ENCODE measurements at regions of chr13 and their contacts with region 1.

Region 1: DNA sequence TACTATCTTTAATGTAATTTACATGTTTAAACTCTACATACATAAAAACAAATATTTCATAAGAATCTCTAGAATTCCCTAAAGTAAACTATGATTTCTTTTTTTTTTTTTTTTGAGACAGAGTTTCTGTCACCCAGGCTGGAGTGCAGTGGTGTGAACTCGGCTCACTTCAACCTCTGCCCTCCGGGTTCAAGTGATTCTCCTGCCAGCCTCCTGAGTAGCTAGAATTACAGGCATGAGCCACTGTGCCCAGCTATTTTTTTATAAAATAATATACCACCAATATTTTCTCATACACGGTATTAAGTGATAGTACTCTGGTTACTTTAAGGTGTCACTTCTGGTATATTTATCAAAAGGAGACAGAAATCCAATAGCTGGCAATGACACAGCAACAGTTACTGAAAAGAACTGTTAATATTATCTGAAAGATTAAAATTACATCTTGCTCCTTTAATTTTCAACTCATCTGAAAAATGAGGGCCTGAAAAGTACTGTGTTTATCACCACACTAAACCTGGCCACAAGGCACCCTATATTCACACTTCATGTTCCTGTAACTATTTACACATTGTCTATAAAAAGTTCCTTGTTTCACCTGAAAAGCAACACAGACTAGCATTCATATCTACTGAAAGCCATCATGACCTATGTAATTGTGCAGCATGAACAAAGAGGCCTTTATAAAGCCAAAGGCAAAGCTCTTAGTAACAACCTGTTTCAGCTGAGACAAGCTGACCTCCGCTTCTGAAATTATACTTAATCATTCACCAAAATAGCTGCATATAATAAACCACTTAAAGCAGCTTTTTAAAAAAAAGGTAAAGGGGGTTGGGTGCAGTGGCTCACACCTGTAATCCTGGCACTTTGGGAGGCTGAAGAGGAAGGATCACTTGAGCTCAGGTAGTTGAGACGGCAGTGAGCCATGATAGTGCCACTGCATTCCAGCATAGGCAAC is 106.1 kb downstream of the SLC25A15 start:
- DNase-seq: peak; percentile 94
- ATAC-seq: peak; percentile 99
- H3K4me3 ChIP-seq: peak overlapping the region; percentile 27 to 42 (median 28); a peak in 3 of 6 replicates
- H3K27ac ChIP-seq: peak overlapping the region; percentile 84
- H3K4me1 ChIP-seq: peaks cover 33% of the 10 kb centered on the region
- H3K27me3 ChIP-seq: no peaks in the 10 kb centered on the region
- CTCF ChIP-seq: no peak
- EP300 ChIP-seq: peak in 1 of 2 experiments; percentile 59; a peak in 2 of 4 replicates
- POLR2A ChIP-seq: no peak; a peak in 1 of 4 replicates
- RAD21 ChIP-seq: no peak

Region 2: GRCh38 chr13:40377783-40378182 is 517.7 kb before region 1 on chr13:
- CTCF ChIA-PET with region 1: no interaction called
- POLR2A ChIA-PET with region 1: no interaction called
- in situ Hi-C with region 1: no loop called
- intact Hi-C with region 1: no loop called
- DNase-seq: no peak
- ATAC-seq: no peak
- H3K4me3 ChIP-seq: no peak overlapping the region
- H3K27ac ChIP-seq: no peak overlapping the region
- H3K4me1 ChIP-seq: peaks cover 27% of the 10 kb centered on the region
- H3K27me3 ChIP-seq: peaks cover 5 to 21% of the 10 kb centered on the region in 2 experiments; a peak in 2 of 5 replicates
- CTCF ChIP-seq: no peak
- EP300 ChIP-seq: no peak
- POLR2A ChIP-seq: no peak
- RAD21 ChIP-seq: no peak

Region 3: GRCh38 chr13:41004875-41005693 is 109.6 kb after region 1 on chr13:
- CTCF ChIA-PET with region 1: no interaction called
- POLR2A ChIA-PET with region 1: no interaction called
- in situ Hi-C with region 1: no loop called
- intact Hi-C with region 1: loop called (anchors 10 kb)
- DNase-seq: no peak
- ATAC-seq: no peak
- H3K4me3 ChIP-seq: no peak overlapping the region; a peak in 1 of 6 replicates
- H3K27ac ChIP-seq: peak overlapping the region; percentile 45
- H3K4me1 ChIP-seq: peaks cover 98% of the 10 kb centered on the region
- H3K27me3 ChIP-seq: no peaks in the 10 kb centered on the region
- CTCF ChIP-seq: no peak
- EP300 ChIP-seq: peak in 1 of 2 experiments; percentile 7; a peak in 1 of 4 replicates
- POLR2A ChIP-seq: no peak
- RAD21 ChIP-seq: no peak

Measured in HepG2 (cell line).